Ascending aorta (tissue), 2 donors: ENCODE measurements at regions of chr16 and their contacts with region 1.

Region 1: GRCh38 chr16:66740010-66740409 is 11.4 kb downstream of the DYNC1LI2 start:
- DNase-seq: no peak
- H3K4me3 ChIP-seq: no peak overlapping the region
- H3K27ac ChIP-seq: peak overlapping the region; percentile 61 to 83
- H3K4me1 ChIP-seq: peaks cover 10 to 21% of the 10 kb centered on the region in 2 donors
- H3K27me3 ChIP-seq: no peaks in the 10 kb centered on the region
- CTCF ChIP-seq: peak in 2 of 3 experiments; percentile 45 to 52

Region 2: GRCh38 chr16:66552286-66553177 is 187.5 kb before region 1 on chr16 and contains the start of gene CKLF:
- intact Hi-C with region 1: no loop called
- DNase-seq: peak; percentile 54 to 96
- H3K4me3 ChIP-seq: peak within 1 kb of the TSS; percentile 67 to 78
- H3K27ac ChIP-seq: peak within 1 kb of the TSS; percentile 88 to 99
- H3K4me1 ChIP-seq: peaks cover 11 to 26% of the 10 kb centered on the region in 2 donors
- H3K27me3 ChIP-seq: no peaks in the 10 kb centered on the region
- CTCF ChIP-seq: no peak
- total RNA-seq, gene CKLF: not detected

Region 3: DNA sequence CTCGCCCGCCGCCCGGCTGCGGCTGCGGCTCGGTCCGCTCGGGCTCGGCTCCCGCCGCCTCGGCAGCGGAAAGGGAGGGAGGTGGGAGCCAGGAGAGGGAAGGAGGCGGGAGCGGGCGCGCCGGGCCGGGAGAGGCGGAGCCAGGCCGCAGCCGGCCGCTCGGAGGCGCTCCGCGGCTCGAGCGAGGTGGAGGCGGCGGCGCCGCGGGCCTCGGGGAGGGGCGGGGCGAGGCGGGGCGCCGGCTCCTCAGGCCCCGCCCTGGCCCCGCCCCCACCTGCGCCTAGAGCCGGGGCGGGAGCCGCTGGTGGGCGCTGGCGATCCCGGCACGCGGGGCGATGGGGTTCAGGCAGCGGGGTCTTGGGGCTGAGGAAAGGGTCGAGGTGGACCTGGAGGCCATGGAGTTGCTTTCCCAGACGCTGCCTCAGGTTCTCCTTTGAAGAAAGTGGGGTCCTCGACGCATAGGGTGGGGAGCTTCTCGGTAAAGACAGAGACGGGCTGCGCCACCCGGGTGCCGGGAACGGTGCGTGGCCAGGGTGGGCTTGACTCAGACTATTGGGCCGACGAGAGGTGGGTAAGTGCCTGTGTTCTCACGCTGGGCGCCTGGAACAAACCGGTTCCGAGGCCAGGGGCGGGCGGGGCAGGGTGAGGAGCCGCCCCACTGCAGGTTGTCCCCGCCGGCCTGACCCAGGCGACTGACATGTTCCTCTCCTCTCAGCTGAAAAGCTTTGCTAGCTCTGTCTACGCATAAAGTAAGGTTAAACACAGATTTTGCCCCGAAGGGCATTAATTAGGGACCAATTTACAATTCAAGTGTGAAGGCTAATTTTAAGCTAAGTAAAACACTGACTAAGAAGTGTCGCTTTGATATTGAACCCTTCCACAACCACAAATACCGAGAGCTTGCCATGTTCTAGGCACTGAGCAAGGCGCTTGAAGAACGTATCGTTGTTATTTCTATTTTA is 43.1 kb before region 1 on chr16 and contains the start of gene CMTM4:
- intact Hi-C with region 1: loop called (anchors 2 kb)
- DNase-seq: peak; percentile 37 to 90
- H3K4me3 ChIP-seq: peak within 1 kb of the TSS; percentile 83 to 88
- H3K27ac ChIP-seq: peak within 1 kb of the TSS; percentile 75
- H3K4me1 ChIP-seq: peaks cover 0 to 3% of the 10 kb centered on the region in 2 donors
- H3K27me3 ChIP-seq: no peaks in the 10 kb centered on the region
- CTCF ChIP-seq: peak in 1 of 3 experiments; percentile 22
- total RNA-seq, gene CMTM4: 20.1 TPM